ENCODE measurements at regions of chr16 and their contacts with region 1.

Region 1: DNA sequence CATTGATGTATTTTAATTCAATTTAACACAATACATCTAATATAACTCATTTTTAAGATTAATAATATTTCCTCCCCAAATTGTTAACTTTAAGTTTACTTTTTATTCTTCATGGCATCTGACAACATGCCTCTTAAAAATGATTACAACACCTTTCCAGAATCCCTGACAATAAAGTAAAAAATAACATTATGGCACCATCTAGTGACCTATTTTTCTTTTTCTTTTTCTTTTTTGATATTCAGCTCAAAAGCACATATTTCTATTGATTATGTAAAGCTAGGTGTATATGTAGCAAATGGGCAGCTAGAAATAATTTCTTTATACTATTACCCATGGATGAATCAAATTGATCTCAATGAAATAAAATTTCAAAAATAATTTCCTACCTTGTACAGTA is 834.3 kb upstream of the CDH8 start:
- DNase-seq: no peak
- H3K4me3 Mint-ChIP-seq: no peak overlapping the region
- H3K27ac Mint-ChIP-seq: no peak overlapping the region
- H3K4me1 Mint-ChIP-seq: no peaks in the 10 kb centered on the region
- H3K27me3 Mint-ChIP-seq: no peaks in the 10 kb centered on the region

Region 2: GRCh38 chr16:62933929-62934328 is 63.4 kb after region 1 on chr16:
- intact Hi-C with region 1: loop called (anchors 10 kb)
- DNase-seq: no peak
- H3K4me3 Mint-ChIP-seq: no peak overlapping the region
- H3K27ac Mint-ChIP-seq: no peak overlapping the region
- H3K4me1 Mint-ChIP-seq: no peaks in the 10 kb centered on the region
- H3K27me3 Mint-ChIP-seq: no peaks in the 10 kb centered on the region